ENCODE measurements at regions of chr6 and their contacts with region 1.

Region 1: DNA sequence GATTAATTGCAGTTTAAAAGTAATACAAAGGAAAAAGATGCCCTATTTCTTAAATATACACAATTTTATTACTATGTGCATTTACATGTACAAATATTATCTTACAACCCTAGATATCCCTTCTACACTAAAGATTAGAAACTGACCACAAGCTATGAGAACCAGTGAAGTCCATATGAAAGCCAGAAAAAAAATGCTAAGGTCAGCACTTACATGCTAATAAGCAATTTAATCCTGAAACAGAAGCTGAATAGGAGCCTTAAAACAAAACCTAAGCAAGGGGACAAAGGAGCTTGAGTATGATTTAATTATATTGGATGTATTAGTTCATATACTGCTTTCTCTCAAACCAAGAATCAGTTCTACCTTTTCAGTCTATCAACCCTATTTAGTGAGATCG is 14.2 kb downstream of the CEP162 start:
- DNase-seq: no peak
- H3K4me3 ChIP-seq: no peak overlapping the region
- H3K27ac ChIP-seq: no peak overlapping the region
- H3K4me1 ChIP-seq: no peaks in the 10 kb centered on the region
- H3K27me3 ChIP-seq: no peaks in the 10 kb centered on the region
- CTCF ChIP-seq: no peak

Region 2: DNA sequence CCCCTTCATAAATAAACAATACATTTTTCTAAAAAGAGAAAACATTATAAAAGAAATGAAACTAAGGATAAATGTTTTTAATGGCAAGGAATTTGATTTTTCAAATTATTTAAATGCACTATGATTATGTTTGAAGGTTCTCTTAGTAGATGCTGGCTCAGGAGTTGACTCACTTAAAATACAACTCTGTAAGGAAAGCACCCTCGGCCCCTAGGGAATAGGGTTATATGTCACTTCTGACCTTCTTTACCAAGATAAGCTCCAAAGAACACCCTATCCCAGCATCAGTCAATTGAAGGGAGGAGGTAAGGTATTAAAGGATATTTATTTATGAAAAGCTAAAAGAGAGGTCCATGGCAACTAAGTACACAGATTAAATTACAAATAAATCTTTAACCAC is 511.1 kb before region 1 on chr6:
- CTCF ChIA-PET with region 1: no interaction called
- dilution Hi-C with region 1: no loop called
- in situ Hi-C with region 1: no loop called
- intact Hi-C with region 1: loop called (anchors 5 kb)
- DNase-seq: no peak
- H3K4me3 ChIP-seq: no peak overlapping the region
- H3K27ac ChIP-seq: no peak overlapping the region
- H3K4me1 ChIP-seq: no peaks in the 10 kb centered on the region
- H3K27me3 ChIP-seq: peaks cover 9% of the 10 kb centered on the region
- CTCF ChIP-seq: no peak

Measured in mammary epithelial cell (primary cell).